PC-9 (cell line): ENCODE measurements at regions of chr4 and their contacts with region 1.

Region 1: GRCh38 chr4:10204401-10205058 is 87.9 kb upstream of the WDR1 start:
- DNase-seq: no peak
- H3K4me3 ChIP-seq: no peak overlapping the region
- H3K27ac ChIP-seq: no peak overlapping the region
- H3K4me1 ChIP-seq: no peaks in the 10 kb centered on the region
- H3K27me3 ChIP-seq: no peaks in the 10 kb centered on the region
- CTCF ChIP-seq: no peak

Region 2: DNA sequence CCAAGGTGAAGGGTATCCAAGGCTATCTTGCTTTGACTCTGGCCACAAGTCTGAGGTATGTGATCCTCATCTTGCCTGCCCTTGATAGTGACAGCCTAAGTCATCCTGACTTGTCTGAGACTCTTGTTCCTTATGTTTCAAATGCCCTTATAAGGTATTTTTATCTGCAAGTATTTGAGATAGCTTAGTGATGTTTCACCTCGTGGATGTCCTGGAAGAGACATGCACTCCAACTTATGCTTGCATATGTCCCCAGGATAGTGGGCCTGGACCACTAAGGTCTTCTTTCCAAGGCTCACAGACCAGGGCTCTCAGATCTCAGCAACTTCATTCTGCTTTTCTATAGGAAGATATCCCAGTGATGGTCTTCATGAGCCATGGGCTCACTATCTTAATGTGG is 32.6 kb after region 1 on chr4:
- CTCF ChIA-PET with region 1: no interaction called
- POLR2A ChIA-PET with region 1: no interaction called
- intact Hi-C with region 1: loop called (anchors 1 kb)
- DNase-seq: no peak
- H3K4me3 ChIP-seq: no peak overlapping the region
- H3K27ac ChIP-seq: no peak overlapping the region
- H3K4me1 ChIP-seq: no peaks in the 10 kb centered on the region
- H3K27me3 ChIP-seq: peaks cover 4% of the 10 kb centered on the region; the same call in 1 of the 2 replicates
- CTCF ChIP-seq: no peak